ENCODE measurements at regions of chr11 and their contacts with region 1.

Region 1: GRCh38 chr11:128757235-128757711 is 63.4 kb downstream of the FLI1 start:
- DNase-seq: peak; percentile 82
- H3K4me3 ChIP-seq: peak overlapping the region in 1 of 8 donors; percentile 30
- H3K27ac ChIP-seq: peak overlapping the region; percentile 32 to 80 (median 62)
- H3K4me1 ChIP-seq: peaks cover 51 to 99% (median 75%) of the 10 kb centered on the region in 6 donors
- H3K27me3 ChIP-seq: no peaks in the 10 kb centered on the region
- CTCF ChIP-seq: peak; percentile 51 to 85 (median 72)
- POLR2A ChIP-seq: no peak

Region 2: GRCh38 chr11:128709402-128709801 is 47.9 kb before region 1 on chr11:
- intact Hi-C with region 1: loop called (anchors 10 kb)
- DNase-seq: no peak
- H3K4me3 ChIP-seq: no peak overlapping the region
- H3K27ac ChIP-seq: peak overlapping the region; percentile 44 to 100 (median 88)
- H3K4me1 ChIP-seq: peaks cover 58 to 100% (median 99%) of the 10 kb centered on the region in 6 donors
- H3K27me3 ChIP-seq: no peaks in the 10 kb centered on the region
- CTCF ChIP-seq: no peak
- POLR2A ChIP-seq: no peak

Region 3: GRCh38 chr11:129230006-129230405 is 472.7 kb after region 1 on chr11:
- intact Hi-C with region 1: no loop called
- DNase-seq: no peak
- H3K4me3 ChIP-seq: no peak overlapping the region
- H3K27ac ChIP-seq: no peak overlapping the region
- H3K4me1 ChIP-seq: no peaks in the 10 kb centered on the region
- H3K27me3 ChIP-seq: no peaks in the 10 kb centered on the region
- CTCF ChIP-seq: no peak
- POLR2A ChIP-seq: no peak

Measured in spleen (tissue), 13 donors.